GM12878 (cell line): ENCODE measurements at regions of chr5 and their contacts with region 1.

Region 1: DNA sequence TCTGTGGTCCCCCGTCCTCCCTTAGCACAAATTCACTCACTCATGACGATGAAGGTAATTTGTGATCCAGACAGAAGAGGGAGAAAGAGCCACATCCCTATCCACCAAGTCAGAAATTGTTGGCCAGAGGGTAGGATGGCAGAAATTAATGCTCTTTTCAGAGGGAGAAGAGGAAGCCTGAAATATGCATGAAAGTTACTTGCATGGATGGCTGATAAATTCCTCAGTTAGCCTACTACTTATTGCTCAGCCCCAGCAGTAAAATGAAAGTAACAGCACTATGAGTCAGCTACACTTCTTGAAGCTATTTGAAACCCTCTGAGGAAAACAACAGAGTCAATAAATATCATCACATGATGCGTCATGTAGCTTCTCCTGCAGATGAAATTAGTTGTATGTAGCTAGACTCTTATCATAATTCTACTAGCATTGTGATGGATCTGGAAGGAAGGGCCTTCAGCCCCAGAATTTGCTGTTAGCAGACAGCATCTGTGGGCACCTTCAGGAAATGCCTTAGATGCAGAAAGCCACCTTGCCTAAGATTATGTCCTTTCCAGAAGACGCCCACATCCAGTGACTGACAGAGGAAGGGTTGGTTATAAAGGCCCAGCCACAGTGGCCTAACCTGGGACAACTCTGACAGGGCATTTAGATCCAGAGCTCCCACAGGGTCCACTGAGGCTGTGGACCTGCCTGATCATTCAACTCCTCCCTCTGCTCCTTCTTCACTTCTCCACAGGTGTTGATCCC is 81.2 kb upstream of the CCDC112 start:
- DNase-seq: peak; percentile 4
- ATAC-seq: peak; percentile 54
- H3K4me3 ChIP-seq: no peak overlapping the region
- H3K27ac ChIP-seq: no peak overlapping the region
- H3K4me1 ChIP-seq: peaks cover 9% of the 10 kb centered on the region
- H3K27me3 ChIP-seq: no peaks in the 10 kb centered on the region
- CTCF ChIP-seq: no peak
- EP300 ChIP-seq: no peak
- POLR2A ChIP-seq: no peak
- RAD21 ChIP-seq: peak; percentile 40

Region 2: GRCh38 chr5:114346181-114346580 is 1031.5 kb before region 1 on chr5:
- CTCF ChIA-PET with region 1: no interaction called
- POLR2A ChIA-PET with region 1: no interaction called
- RAD21 ChIA-PET with region 1: no interaction called
- SMC1A ChIA-PET with region 1: no interaction called
- in situ Hi-C with region 1: no loop called
- intact Hi-C with region 1: no loop called
- DNase-seq: no peak
- ATAC-seq: no peak
- H3K4me3 ChIP-seq: no peak overlapping the region
- H3K27ac ChIP-seq: no peak overlapping the region
- H3K4me1 ChIP-seq: no peaks in the 10 kb centered on the region
- H3K27me3 ChIP-seq: no peaks in the 10 kb centered on the region
- CTCF ChIP-seq: no peak
- EP300 ChIP-seq: no peak
- POLR2A ChIP-seq: no peak
- RAD21 ChIP-seq: no peak

Region 3: GRCh38 chr5:115321309-115321708 is 56.3 kb before region 1 on chr5:
- CTCF ChIA-PET with region 1: interaction called, 5 read pairs
- POLR2A ChIA-PET with region 1: no interaction called
- RAD21 ChIA-PET with region 1: interaction called, 3 read pairs
- SMC1A ChIA-PET with region 1: interaction called, 12 read pairs
- in situ Hi-C with region 1: no loop called
- intact Hi-C with region 1: no loop called
- DNase-seq: no peak
- ATAC-seq: no peak
- H3K4me3 ChIP-seq: no peak overlapping the region
- H3K27ac ChIP-seq: no peak overlapping the region
- H3K4me1 ChIP-seq: no peaks in the 10 kb centered on the region
- H3K27me3 ChIP-seq: no peaks in the 10 kb centered on the region
- CTCF ChIP-seq: no peak
- EP300 ChIP-seq: no peak
- POLR2A ChIP-seq: no peak
- RAD21 ChIP-seq: no peak

Region 4: DNA sequence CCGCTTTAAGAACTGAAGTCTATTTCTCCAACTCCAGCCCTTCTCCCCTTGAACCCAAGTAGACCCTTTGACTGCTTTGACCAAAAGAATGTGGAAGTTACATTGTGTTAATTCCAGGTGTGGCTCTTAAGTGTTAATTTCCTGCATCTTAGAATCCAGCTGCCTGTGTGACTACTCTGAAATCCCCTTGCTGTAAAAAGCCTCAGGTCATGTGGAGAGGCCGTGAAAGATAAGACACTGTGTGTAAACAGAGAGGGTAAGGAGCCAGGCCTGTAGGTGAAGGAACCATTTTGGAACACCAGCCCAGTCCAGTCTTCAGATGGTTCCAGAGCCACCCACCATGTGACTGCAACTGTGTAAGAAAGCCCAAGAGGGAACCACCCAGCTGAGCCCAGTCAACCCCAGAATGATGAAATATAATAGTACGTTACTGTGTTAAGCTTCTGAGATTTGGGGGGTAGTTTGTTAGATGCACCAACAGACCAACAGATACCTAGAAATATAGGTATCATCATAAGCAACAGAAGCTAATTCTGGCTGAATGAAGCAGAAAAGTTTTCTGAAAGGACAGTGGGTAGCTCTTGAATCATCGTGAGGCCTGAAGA is 21.8 kb before region 1 on chr5:
- CTCF ChIA-PET with region 1: interaction called, 4 read pairs
- POLR2A ChIA-PET with region 1: interaction called, 3 read pairs
- RAD21 ChIA-PET with region 1: no interaction called
- SMC1A ChIA-PET with region 1: interaction called, 20 read pairs
- in situ Hi-C with region 1: no loop called
- intact Hi-C with region 1: no loop called
- DNase-seq: no peak
- ATAC-seq: peak; percentile 31; the same call in 2 of the 3 replicates
- H3K4me3 ChIP-seq: no peak overlapping the region
- H3K27ac ChIP-seq: no peak overlapping the region
- H3K4me1 ChIP-seq: no peaks in the 10 kb centered on the region
- H3K27me3 ChIP-seq: no peaks in the 10 kb centered on the region; a peak in 1 of 4 replicates
- CTCF ChIP-seq: no peak
- EP300 ChIP-seq: no peak
- POLR2A ChIP-seq: no peak
- RAD21 ChIP-seq: no peak

Region 5: GRCh38 chr5:115389799-115390382 is 12.2 kb after region 1 on chr5:
- CTCF ChIA-PET with region 1: interaction called, 8 read pairs
- POLR2A ChIA-PET with region 1: interaction called, 10 read pairs
- RAD21 ChIA-PET with region 1: interaction called, 5 read pairs
- SMC1A ChIA-PET with region 1: interaction called, 38 read pairs
- in situ Hi-C with region 1: no loop called
- intact Hi-C with region 1: no loop called
- DNase-seq: no peak
- ATAC-seq: peak; percentile 49; the same call in 1 of the 3 replicates
- H3K4me3 ChIP-seq: no peak overlapping the region
- H3K27ac ChIP-seq: no peak overlapping the region
- H3K4me1 ChIP-seq: peaks cover 4% of the 10 kb centered on the region; the same call in 1 of the 2 replicates
- H3K27me3 ChIP-seq: no peaks in the 10 kb centered on the region
- CTCF ChIP-seq: peak in 2 of 3 experiments; percentile 21 to 22; a peak in 3 of 6 replicates
- EP300 ChIP-seq: no peak
- POLR2A ChIP-seq: no peak
- RAD21 ChIP-seq: peak; percentile 57

Region 6: GRCh38 chr5:115522832-115523403 is 145.3 kb after region 1 on chr5:
- CTCF ChIA-PET with region 1: interaction called, 3 read pairs
- POLR2A ChIA-PET with region 1: no interaction called
- RAD21 ChIA-PET with region 1: interaction called, 4 read pairs
- SMC1A ChIA-PET with region 1: interaction called, 10 read pairs
- in situ Hi-C with region 1: no loop called
- intact Hi-C with region 1: no loop called
- DNase-seq: no peak
- ATAC-seq: peak; percentile 13; the same call in 2 of the 3 replicates
- H3K4me3 ChIP-seq: no peak overlapping the region
- H3K27ac ChIP-seq: no peak overlapping the region
- H3K4me1 ChIP-seq: no peaks in the 10 kb centered on the region
- H3K27me3 ChIP-seq: no peaks in the 10 kb centered on the region
- CTCF ChIP-seq: no peak
- EP300 ChIP-seq: no peak
- POLR2A ChIP-seq: no peak
- RAD21 ChIP-seq: no peak

Region 7: GRCh38 chr5:115579747-115580173 is 202.1 kb after region 1 on chr5:
- CTCF ChIA-PET with region 1: interaction called, 28 read pairs
- POLR2A ChIA-PET with region 1: interaction called, 4 read pairs
- RAD21 ChIA-PET with region 1: interaction called, 20 read pairs
- SMC1A ChIA-PET with region 1: interaction called, 16 read pairs
- in situ Hi-C with region 1: no loop called
- intact Hi-C with region 1: no loop called
- DNase-seq: peak; percentile 77
- ATAC-seq: peak; percentile 81
- H3K4me3 ChIP-seq: no peak overlapping the region
- H3K27ac ChIP-seq: peak overlapping the region; percentile 85
- H3K4me1 ChIP-seq: peaks cover 44% of the 10 kb centered on the region
- H3K27me3 ChIP-seq: no peaks in the 10 kb centered on the region
- CTCF ChIP-seq: no peak
- EP300 ChIP-seq: peak; percentile 60 to 63; a peak in 2 of 4 replicates
- POLR2A ChIP-seq: no peak
- RAD21 ChIP-seq: no peak

Region 8: GRCh38 chr5:115586601-115587048 is 209.0 kb after region 1 on chr5:
- CTCF ChIA-PET with region 1: interaction called, 6 read pairs
- POLR2A ChIA-PET with region 1: interaction called, 4 read pairs
- RAD21 ChIA-PET with region 1: no interaction called
- SMC1A ChIA-PET with region 1: interaction called, 4 read pairs
- in situ Hi-C with region 1: no loop called
- intact Hi-C with region 1: loop called (anchors 5 kb)
- DNase-seq: no peak
- ATAC-seq: peak; percentile 71
- H3K4me3 ChIP-seq: no peak overlapping the region
- H3K27ac ChIP-seq: no peak overlapping the region
- H3K4me1 ChIP-seq: peaks cover 12% of the 10 kb centered on the region; the same call in 1 of the 2 replicates
- H3K27me3 ChIP-seq: no peaks in the 10 kb centered on the region
- CTCF ChIP-seq: peak; percentile 9 to 60 (median 51); a peak in 5 of 6 replicates
- EP300 ChIP-seq: no peak
- POLR2A ChIP-seq: no peak
- RAD21 ChIP-seq: peak; percentile 81

Region 9: DNA sequence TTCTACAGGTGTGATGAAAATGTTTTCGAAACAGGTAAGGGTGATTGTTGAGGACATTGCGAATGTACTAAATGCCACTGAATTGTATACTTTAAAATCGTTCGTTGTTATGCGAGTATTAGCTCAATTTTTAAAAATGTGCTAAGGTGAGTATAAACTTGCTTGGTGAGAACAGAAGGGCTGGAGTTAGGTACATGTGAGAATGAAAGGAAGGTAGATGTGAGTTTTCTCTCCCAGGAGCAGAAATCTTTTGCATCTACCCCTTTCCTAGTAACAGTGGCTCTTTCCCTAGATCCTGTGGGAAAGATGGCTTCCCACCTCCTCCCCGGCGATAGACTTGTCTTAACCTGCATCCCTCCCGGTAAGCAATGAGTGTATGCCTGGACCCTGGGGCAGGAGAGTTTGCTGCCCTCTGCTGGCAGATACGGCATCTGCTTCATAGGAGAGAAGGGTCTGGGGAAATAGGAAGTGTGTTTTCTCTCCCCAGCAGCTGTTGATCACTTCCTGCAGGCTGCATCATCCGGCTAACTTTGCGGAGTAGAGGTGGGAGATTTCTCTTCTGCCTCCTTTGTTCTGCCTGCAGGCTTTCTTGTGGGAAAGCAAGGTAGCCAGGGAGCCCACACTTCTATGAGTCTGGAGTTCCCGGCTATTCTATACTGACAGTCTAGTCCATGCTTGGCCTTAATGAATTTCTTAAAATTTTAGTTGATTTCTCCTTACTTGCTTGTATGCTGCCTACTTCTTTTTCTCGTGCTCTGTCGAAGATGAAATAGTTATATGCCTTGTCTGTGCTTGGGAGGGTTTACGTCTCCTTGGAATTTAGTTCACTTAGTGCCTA is 1570.3 kb after region 1 on chr5:
- CTCF ChIA-PET with region 1: no interaction called
- POLR2A ChIA-PET with region 1: no interaction called
- RAD21 ChIA-PET with region 1: no interaction called
- SMC1A ChIA-PET with region 1: no interaction called
- in situ Hi-C with region 1: no loop called
- intact Hi-C with region 1: no loop called
- DNase-seq: peak; percentile 87
- ATAC-seq: peak; percentile 100
- H3K4me3 ChIP-seq: no peak overlapping the region
- H3K27ac ChIP-seq: no peak overlapping the region
- H3K4me1 ChIP-seq: peaks cover 3% of the 10 kb centered on the region
- H3K27me3 ChIP-seq: peaks cover 0 to 1% of the 10 kb centered on the region in 2 experiments; a peak in 1 of 4 replicates
- CTCF ChIP-seq: peak; percentile 88 to 94 (median 92)
- EP300 ChIP-seq: 0 out of 4 replicates have a peak, but pooled peaks of 1 of the 2 experiments have one; percentile 35
- POLR2A ChIP-seq: no peak
- RAD21 ChIP-seq: peak; percentile 98